ENCODE measurements at regions of chr3 and their contacts with region 1.

Region 1: DNA sequence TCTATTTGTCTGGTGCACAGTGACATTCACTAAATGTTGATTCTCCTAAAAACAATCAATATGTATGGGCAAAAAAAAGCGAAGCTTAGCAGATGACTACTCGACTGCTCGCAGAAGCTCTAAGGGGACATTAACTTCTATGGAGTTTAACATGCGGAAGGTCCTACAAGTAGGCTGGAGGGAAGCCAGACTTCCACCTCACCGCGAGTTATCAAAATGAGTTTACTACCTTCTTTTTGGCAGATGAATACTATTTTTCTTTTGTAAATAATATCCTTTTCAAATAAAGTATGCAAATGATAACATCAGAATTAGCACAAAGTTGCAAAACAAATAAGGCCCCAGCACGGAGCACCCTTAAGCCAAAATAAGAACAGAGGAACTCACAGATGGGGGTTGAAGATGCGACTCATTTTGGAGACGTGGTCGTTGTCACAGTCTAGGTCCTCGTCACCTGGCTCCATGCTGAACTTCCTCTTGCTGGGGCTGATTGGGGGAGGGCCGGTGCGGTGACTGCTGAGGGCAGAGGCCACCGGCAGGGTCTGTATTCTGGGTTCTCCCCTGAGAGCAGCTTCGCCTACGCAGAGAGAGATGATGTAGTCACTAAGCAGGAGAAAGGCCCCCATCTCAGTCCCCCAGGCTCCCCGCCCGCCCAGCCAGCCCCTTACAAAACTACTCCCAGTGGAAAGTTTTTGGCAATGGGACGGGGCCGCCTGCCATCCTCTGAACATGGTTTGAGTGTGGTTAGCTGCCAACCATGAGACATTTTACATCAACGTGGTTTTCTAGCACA is 42.1 kb downstream of the VGLL4 start:
- DNase-seq: no peak
- H3K4me3 ChIP-seq: no peak overlapping the region
- H3K27ac ChIP-seq: peak overlapping the region; percentile 68
- H3K4me1 ChIP-seq: peaks cover 32% of the 10 kb centered on the region
- H3K27me3 ChIP-seq: no peaks in the 10 kb centered on the region
- CTCF ChIP-seq: no peak

Region 2: DNA sequence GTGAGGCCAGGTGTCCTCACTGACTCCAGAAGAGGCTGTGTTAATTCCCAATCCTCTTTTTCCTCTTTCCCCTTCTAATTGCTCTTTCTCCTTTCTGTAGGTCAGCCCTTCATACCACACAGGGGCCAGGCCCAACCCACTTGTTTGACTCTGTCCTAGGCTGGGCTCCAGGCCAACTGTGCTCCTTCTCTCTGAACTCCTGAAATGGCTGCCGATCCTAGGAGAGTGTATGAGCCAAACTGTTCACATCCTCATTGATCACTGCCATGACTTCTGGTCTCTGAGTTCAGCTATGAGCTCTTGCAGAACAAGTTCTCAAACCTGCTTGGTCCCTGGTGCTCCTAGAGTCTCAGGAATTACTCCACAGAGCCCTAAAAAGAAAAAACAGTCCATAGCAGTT is 103.0 kb before region 1 on chr3:
- CTCF ChIA-PET with region 1: no interaction called
- POLR2A ChIA-PET with region 1: no interaction called
- intact Hi-C with region 1: loop called (anchors 1 kb)
- DNase-seq: peak; percentile 64 to 78
- H3K4me3 ChIP-seq: no peak overlapping the region
- H3K27ac ChIP-seq: peak overlapping the region; percentile 79
- H3K4me1 ChIP-seq: peaks cover 40% of the 10 kb centered on the region
- H3K27me3 ChIP-seq: no peaks in the 10 kb centered on the region
- CTCF ChIP-seq: no peak

Region 3: GRCh38 chr3:11568503-11569155 is 33.0 kb before region 1 on chr3:
- CTCF ChIA-PET with region 1: no interaction called
- POLR2A ChIA-PET with region 1: no interaction called
- intact Hi-C with region 1: loop called (anchors 1 kb)
- DNase-seq: peak; percentile 51 to 52
- H3K4me3 ChIP-seq: peak overlapping the region; percentile 30; the same call in 1 of the 2 replicates
- H3K27ac ChIP-seq: peak overlapping the region; percentile 96
- H3K4me1 ChIP-seq: peaks cover 34% of the 10 kb centered on the region
- H3K27me3 ChIP-seq: no peaks in the 10 kb centered on the region
- CTCF ChIP-seq: no peak

Region 4: GRCh38 chr3:11624161-11624560 is 22.5 kb after region 1 on chr3:
- CTCF ChIA-PET with region 1: no interaction called
- POLR2A ChIA-PET with region 1: interaction called, 11 read pairs
- intact Hi-C with region 1: loop called (anchors 1 kb)
- DNase-seq: no peak
- H3K4me3 ChIP-seq: no peak overlapping the region
- H3K27ac ChIP-seq: no peak overlapping the region
- H3K4me1 ChIP-seq: no peaks in the 10 kb centered on the region; the same call in 1 of the 2 replicates
- H3K27me3 ChIP-seq: no peaks in the 10 kb centered on the region
- CTCF ChIP-seq: no peak

Region 5: DNA sequence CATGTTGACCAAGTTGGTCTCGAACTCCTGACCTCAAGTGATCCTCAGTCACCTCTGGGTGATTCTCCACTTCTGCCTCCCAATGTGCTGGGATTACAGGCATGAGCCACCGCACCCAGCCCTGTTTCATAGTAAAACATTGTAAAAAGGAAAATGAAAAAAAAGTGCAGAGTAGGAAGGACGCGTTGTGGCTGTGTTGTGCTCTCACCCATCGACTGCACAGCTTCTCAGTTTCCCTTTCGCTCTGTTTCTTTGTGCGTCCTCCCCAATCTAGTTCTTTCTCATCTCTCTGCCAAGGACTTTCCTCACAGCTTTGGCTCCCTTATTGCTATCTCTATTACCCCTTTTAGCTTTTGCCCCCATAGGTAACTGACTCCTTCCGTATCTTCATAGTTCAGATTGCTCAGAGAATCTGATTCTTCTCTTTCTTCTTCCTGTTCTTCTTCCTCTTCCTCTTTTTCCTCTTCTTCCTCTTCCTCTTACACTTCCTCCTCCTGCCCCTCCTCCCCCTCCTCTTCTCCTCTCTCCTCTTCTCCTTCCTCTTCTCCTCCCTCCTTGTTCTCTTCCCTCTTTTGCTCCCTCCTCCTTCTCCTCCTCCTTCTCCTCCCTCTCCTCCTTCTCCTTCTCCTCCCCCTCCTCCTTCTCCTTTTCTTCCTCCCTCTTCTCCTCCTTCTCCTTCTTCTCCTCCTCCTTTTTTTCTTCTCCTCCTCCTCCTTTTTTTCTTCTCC is 123.1 kb after region 1 on chr3:
- CTCF ChIA-PET with region 1: no interaction called
- POLR2A ChIA-PET with region 1: no interaction called
- intact Hi-C with region 1: no loop called
- DNase-seq: no peak
- H3K4me3 ChIP-seq: no peak overlapping the region
- H3K27ac ChIP-seq: no peak overlapping the region
- H3K4me1 ChIP-seq: peaks cover 21% of the 10 kb centered on the region
- H3K27me3 ChIP-seq: no peaks in the 10 kb centered on the region
- CTCF ChIP-seq: no peak

Region 6: GRCh38 chr3:11770477-11771391 is 169.1 kb after region 1 on chr3:
- CTCF ChIA-PET with region 1: no interaction called
- POLR2A ChIA-PET with region 1: no interaction called
- intact Hi-C with region 1: loop called (anchors 1 kb)
- DNase-seq: peak; percentile 89 to 96
- H3K4me3 ChIP-seq: peak overlapping the region; percentile 47
- H3K27ac ChIP-seq: peak overlapping the region; percentile 96
- H3K4me1 ChIP-seq: peaks cover 43% of the 10 kb centered on the region
- H3K27me3 ChIP-seq: no peaks in the 10 kb centered on the region
- CTCF ChIP-seq: no peak

Region 7: GRCh38 chr3:11803977-11804892 is 202.6 kb after region 1 on chr3:
- CTCF ChIA-PET with region 1: no interaction called
- POLR2A ChIA-PET with region 1: no interaction called
- intact Hi-C with region 1: no loop called
- DNase-seq: peak; percentile 15 to 44
- H3K4me3 ChIP-seq: no peak overlapping the region
- H3K27ac ChIP-seq: no peak overlapping the region
- H3K4me1 ChIP-seq: peaks cover 2% of the 10 kb centered on the region; the same call in 1 of the 2 replicates
- H3K27me3 ChIP-seq: no peaks in the 10 kb centered on the region
- CTCF ChIP-seq: peak; percentile 84